Activated CD8-positive, alpha-beta T cell treated with anti-CD3 and anti-CD28 coated beads, Interleukin-2, amount 10 ng/mL, durations not matched to agents 7 days and 5 days (primary cell): ENCODE measurements at regions of chr14 and their contacts with region 1.

Region 1: DNA sequence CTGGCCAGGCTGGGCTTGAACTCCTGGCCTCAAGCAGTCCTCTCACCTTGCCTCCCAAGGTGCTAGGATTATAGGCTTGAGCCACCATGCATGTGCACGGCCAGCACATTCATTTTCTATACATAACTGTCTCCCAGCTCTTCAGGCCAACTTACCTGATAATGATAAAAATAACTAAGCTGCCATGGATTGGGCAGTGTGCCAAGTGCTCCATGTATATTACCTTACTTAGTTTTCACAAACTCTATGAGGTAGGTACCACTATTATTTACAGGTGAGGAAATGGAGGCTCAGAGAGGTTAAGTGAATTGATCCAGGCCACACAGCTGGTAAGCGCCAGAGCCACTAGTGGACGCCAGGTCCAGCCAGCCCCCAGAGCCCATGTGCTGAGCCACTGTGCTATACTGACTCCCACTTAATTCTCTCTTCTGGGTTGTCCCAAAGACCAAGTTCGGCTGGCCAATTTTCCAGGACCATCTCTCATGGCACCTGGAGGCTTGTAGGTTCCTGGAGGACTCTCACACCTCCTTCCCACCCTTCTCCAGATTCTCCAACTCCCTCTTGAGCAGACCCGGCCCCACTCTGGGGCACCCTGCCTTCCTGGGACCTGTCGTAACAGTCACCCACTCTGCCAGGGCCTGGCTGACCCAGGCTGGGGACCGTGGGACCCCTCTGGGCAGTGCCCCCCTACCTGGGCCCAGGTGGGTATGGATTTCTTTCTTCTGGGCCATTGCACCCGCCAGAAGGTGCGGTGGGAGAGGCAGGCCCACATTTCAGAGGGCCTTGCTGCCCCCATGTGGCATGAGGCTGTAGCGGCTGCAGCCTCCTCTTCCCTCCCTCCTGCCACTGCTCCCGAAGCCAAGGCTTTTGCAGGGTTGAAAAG is 30.2 kb upstream of the CIPC start:
- DNase-seq: peak; percentile 72
- ATAC-seq: peak; percentile 83
- H3K4me3 Mint-ChIP-seq: no peak overlapping the region
- H3K27ac Mint-ChIP-seq: no peak overlapping the region
- H3K4me1 Mint-ChIP-seq: peaks cover 9% of the 10 kb centered on the region
- H3K27me3 Mint-ChIP-seq: peaks cover 11% of the 10 kb centered on the region

Region 2: DNA sequence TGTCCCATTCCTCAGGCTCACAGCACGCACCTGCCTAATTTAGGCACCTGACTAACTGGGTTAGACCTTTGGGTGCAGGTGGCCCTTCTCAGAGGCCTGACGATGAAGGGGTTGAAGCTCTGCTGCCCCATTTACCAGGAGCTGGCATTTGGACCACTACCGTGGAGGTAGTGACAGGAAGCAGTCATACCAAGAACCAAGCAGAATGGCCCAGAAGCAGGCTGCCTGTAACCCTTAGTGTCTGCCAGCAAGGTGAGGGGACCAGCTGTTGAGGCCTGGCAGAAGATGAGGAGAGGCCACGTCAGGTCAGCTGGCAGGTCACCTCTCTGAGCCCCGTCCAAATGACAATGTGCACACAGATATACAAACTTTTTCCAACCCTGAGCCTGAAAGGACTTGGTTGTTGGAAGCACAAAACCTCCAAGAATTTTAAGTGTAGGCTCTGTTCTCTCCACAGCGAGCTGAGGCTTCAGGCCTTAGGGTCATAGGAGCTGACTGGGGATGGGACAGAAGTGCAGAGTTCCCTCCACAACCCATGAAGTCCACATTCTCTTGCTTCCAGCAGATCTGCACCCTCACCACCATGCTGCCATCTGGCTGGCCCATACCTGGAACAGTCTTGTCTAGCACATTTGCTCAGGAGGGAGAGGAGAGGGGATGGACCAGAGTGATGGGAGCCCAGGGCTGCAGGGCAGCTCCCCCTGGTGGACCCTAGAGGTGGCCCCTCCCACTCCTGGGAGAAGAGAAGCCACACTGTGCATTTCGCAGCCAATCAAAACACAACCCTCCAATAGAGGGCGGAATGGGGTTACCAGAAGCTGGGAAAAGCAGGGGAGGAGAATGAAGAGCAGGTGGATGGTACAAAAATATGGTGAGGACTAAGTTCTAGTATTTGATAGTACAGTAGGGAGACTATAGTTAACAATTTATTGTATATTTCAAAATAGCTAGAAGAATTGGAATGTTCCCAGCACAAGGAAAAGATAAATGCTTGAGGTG is 283.3 kb before region 1 on chr14:
- CTCF ChIA-PET with region 1: interaction called, 12 read pairs
- POLR2A ChIA-PET with region 1: no interaction called
- DNase-seq: peak; percentile 68
- ATAC-seq: peak; percentile 81
- H3K4me3 Mint-ChIP-seq: no peak overlapping the region
- H3K27ac Mint-ChIP-seq: peak overlapping the region; percentile 12
- H3K4me1 Mint-ChIP-seq: peaks cover 50% of the 10 kb centered on the region
- H3K27me3 Mint-ChIP-seq: no peaks in the 10 kb centered on the region

Region 3: GRCh38 chr14:76881348-76881747 is 186.5 kb before region 1 on chr14:
- CTCF ChIA-PET with region 1: interaction called, 371 read pairs
- POLR2A ChIA-PET with region 1: interaction called, 6 read pairs
- DNase-seq: no peak
- ATAC-seq: no peak
- H3K4me3 Mint-ChIP-seq: no peak overlapping the region
- H3K27ac Mint-ChIP-seq: no peak overlapping the region
- H3K4me1 Mint-ChIP-seq: peaks cover 12% of the 10 kb centered on the region
- H3K27me3 Mint-ChIP-seq: peaks cover 2% of the 10 kb centered on the region

Region 4: GRCh38 chr14:76904740-76905438 is 163.0 kb before region 1 on chr14:
- CTCF ChIA-PET with region 1: interaction called, 121 read pairs
- POLR2A ChIA-PET with region 1: no interaction called
- DNase-seq: peak; percentile 75
- ATAC-seq: peak; percentile 59
- H3K4me3 Mint-ChIP-seq: no peak overlapping the region
- H3K27ac Mint-ChIP-seq: peak overlapping the region; percentile 50
- H3K4me1 Mint-ChIP-seq: peaks cover 42% of the 10 kb centered on the region
- H3K27me3 Mint-ChIP-seq: no peaks in the 10 kb centered on the region

Region 5: GRCh38 chr14:77086017-77086736 is 18.3 kb after region 1 on chr14:
- CTCF ChIA-PET with region 1: interaction called, 48 read pairs
- POLR2A ChIA-PET with region 1: no interaction called
- DNase-seq: no peak
- ATAC-seq: peak; percentile 49
- H3K4me3 Mint-ChIP-seq: no peak overlapping the region
- H3K27ac Mint-ChIP-seq: no peak overlapping the region
- H3K4me1 Mint-ChIP-seq: peaks cover 4% of the 10 kb centered on the region
- H3K27me3 Mint-ChIP-seq: peaks cover 6% of the 10 kb centered on the region

Region 6: DNA sequence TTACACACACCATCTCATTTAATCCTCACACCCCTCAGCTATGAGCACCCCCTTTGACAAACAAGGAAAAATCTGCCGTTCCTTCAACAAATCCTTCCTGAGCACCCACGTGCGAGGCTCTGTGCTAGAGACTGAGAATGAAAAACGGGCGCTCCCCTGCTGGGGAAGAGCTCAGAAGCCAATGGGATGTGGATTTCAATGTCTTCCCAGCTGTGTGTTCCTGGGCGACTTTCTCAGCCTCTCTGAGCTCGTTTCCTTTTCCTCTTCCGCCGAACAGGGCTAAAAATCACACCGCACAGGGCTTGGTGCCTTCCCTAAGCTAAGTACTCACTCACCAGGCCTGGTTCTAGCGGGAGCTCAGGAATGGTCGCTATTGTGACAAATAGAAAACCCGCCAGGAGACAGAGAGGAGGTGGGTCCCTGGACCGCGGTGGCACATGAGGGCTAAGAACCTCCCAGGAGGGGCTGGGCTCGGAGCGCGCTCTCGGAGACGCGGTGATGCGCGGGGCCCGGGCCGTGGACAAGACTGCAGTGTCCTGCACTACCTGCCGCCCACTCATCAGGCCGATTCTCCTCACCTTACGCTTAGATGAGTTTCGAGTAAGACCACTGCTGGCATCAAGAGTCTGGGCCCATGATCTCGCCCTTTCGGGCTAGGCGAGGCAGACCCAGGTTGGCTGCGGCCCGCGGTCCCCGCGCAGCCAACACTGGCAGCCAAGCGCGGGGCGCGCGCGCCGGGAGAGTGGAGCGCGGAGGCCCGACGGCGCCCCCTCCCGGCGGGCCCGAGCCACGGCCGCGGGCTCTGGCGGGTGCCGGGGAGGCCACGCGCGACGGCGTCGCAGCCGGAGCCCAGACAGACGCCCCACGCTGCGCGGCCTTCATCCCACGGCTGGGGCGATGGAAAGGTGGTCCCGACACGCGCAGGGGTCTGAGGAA is 56.7 kb after region 1 on chr14:
- CTCF ChIA-PET with region 1: interaction called, 30 read pairs
- POLR2A ChIA-PET with region 1: no interaction called
- DNase-seq: peak; percentile 56
- ATAC-seq: peak; percentile 87
- H3K4me3 Mint-ChIP-seq: peak overlapping the region; percentile 70
- H3K27ac Mint-ChIP-seq: no peak overlapping the region
- H3K4me1 Mint-ChIP-seq: peaks cover 40% of the 10 kb centered on the region
- H3K27me3 Mint-ChIP-seq: peaks cover 47% of the 10 kb centered on the region

Region 7: DNA sequence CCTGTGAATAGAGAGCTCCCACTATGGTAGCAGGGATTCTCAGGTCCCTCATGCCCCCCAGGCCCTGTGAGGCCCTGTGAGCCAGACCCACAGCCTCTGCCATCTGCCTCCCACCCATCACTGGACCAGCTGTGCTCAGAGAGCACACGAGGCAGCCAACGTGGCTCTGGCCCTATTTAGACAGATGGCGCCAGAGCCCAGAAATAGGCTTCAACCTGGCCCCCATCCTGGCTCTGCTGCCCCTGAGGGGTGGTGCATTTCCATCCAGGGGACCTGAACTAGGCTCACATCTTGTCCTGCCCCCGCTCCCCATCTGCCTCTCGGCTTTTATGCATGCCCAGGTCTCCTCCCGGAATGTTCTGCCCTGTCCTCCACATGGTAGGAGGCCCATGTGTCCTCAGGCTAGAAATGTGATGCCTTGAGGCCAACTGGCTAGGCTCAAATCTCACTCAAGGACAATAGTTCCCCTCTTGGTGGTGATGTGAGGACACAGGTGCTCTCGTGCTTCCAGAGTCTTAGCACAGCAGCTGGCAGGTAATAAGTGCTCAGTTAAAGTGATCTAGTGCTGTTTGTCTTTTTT is 132.6 kb after region 1 on chr14:
- CTCF ChIA-PET with region 1: no interaction called
- POLR2A ChIA-PET with region 1: no interaction called
- DNase-seq: no peak
- ATAC-seq: no peak
- H3K4me3 Mint-ChIP-seq: no peak overlapping the region
- H3K27ac Mint-ChIP-seq: no peak overlapping the region
- H3K4me1 Mint-ChIP-seq: no peaks in the 10 kb centered on the region
- H3K27me3 Mint-ChIP-seq: peaks cover 2% of the 10 kb centered on the region

Region 8: GRCh38 chr14:77260631-77261030 is 192.8 kb after region 1 on chr14:
- CTCF ChIA-PET with region 1: no interaction called
- POLR2A ChIA-PET with region 1: no interaction called
- DNase-seq: no peak
- ATAC-seq: no peak
- H3K4me3 Mint-ChIP-seq: no peak overlapping the region
- H3K27ac Mint-ChIP-seq: no peak overlapping the region
- H3K4me1 Mint-ChIP-seq: peaks cover 2% of the 10 kb centered on the region
- H3K27me3 Mint-ChIP-seq: peaks cover 13% of the 10 kb centered on the region